Posterior vena cava (tissue), 2 donors: ENCODE measurements at regions of chr10 and their contacts with region 1.

Region 1: DNA sequence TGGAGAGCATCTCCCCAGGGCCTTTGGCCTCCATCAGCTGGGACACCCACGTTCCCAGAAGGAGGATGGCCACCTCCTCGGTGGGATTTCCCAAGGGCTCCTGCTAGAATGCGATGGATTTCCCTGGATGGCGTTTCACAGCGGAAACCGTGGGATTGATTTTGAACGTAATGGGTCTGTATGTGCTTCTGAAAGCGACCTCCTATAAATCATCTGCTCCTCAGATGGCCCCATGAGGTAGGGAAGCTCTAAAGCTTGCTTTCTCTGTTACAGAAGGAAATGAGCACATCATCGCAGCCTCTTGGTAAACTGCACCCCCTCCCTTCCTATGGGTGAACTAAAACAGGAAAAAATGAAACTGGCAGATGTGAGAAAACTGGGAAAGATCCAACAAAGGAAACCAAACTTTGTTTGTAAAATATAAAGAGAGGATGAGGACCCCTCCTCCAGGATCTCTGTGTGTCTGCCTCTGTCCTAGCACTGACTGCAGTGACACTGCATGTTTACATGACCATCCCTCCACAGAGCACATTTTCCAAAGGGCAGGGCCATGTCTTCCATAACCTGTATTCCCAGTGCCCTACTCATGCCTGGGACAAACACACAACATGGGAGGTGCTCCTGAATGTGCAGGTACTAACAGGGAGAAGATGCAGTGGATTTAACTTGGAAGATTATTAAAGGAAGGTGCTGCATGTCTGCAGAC is 57.6 kb downstream of the LYZL1 start:
- DNase-seq: no peak

Region 2: DNA sequence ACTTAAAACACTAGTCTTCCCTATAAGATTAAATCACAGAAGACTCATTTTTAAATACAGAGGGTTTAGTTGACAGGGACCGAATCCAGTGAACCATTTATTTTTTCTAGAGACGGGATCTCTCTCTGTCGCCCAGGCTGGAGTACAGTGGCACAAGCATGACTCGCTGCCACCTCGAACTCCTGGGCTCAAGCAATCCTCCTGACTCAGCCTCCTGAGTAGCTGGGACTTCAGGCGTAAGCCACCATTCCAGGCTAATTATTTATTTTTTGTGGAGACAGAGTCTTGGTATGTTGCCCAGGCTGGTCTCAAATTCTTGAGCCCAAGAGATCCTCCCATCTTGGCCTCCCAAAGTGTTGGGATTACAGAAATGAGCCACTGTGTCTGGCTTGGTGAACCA is 78.4 kb before region 1 on chr10:
- intact Hi-C with region 1: loop called in 1 of 2 experiments (anchors 2 kb)
- DNase-seq: no peak

Region 3: GRCh38 chr10:29324220-29324841 is 22.1 kb before region 1 on chr10:
- intact Hi-C with region 1: no loop called
- DNase-seq: no peak